Aorta (tissue), 5 donors: ENCODE measurements at regions of chr16 and their contacts with region 1.

Region 1: GRCh38 chr16:13919683-13920509 is at the start of gene ERCC4:
- DNase-seq: peak; percentile 100
- ATAC-seq: peak; percentile 99
- H3K4me3 ChIP-seq: peak within 1 kb of the TSS; percentile 52 to 67
- H3K27ac ChIP-seq: peak within 1 kb of the TSS in 1 of 2 donors; percentile 42
- H3K4me1 ChIP-seq: no peaks in the 10 kb centered on the region
- H3K27me3 ChIP-seq: no peaks in the 10 kb centered on the region
- total RNA-seq, gene ERCC4: 9.1 to 14.0 TPM

Region 2: GRCh38 chr16:13594823-13595222 is 325.1 kb before region 1 on chr16:
- intact Hi-C with region 1: no loop called
- DNase-seq: no peak
- ATAC-seq: no peak
- H3K4me3 ChIP-seq: no peak overlapping the region
- H3K27ac ChIP-seq: no peak overlapping the region
- H3K4me1 ChIP-seq: no peaks in the 10 kb centered on the region
- H3K27me3 ChIP-seq: no peaks in the 10 kb centered on the region

Region 3: GRCh38 chr16:13866073-13866472 is 53.8 kb before region 1 on chr16:
- intact Hi-C with region 1: loop called in 1 of 2 experiments (anchors 5 kb)
- DNase-seq: peak; percentile 65 to 84
- ATAC-seq: peak; percentile 78
- H3K4me3 ChIP-seq: no peak overlapping the region
- H3K27ac ChIP-seq: no peak overlapping the region
- H3K4me1 ChIP-seq: peaks cover 4 to 12% of the 10 kb centered on the region in 2 donors
- H3K27me3 ChIP-seq: no peaks in the 10 kb centered on the region

Region 4: GRCh38 chr16:13961099-13961811 is 41.4 kb after region 1 on chr16:
- intact Hi-C with region 1: no loop called
- DNase-seq: no peak
- ATAC-seq: no peak
- H3K4me3 ChIP-seq: no peak overlapping the region
- H3K27ac ChIP-seq: no peak overlapping the region
- H3K4me1 ChIP-seq: no peaks in the 10 kb centered on the region
- H3K27me3 ChIP-seq: no peaks in the 10 kb centered on the region

Region 5: GRCh38 chr16:14186007-14186794 is 266.3 kb after region 1 on chr16:
- intact Hi-C with region 1: loop called (anchors 2 to 5 kb)
- DNase-seq: peak; percentile 58 to 81
- ATAC-seq: peak; percentile 80
- H3K4me3 ChIP-seq: peak overlapping the region; percentile 26 to 66
- H3K27ac ChIP-seq: peak overlapping the region; percentile 11 to 62
- H3K4me1 ChIP-seq: peaks cover 2 to 4% of the 10 kb centered on the region in 2 donors
- H3K27me3 ChIP-seq: no peaks in the 10 kb centered on the region

Region 6: GRCh38 chr16:14240219-14240843 is 320.4 kb after region 1 on chr16:
- intact Hi-C with region 1: loop called (anchors 5 kb)
- DNase-seq: no peak
- ATAC-seq: peak; percentile 44
- H3K4me3 ChIP-seq: no peak overlapping the region
- H3K27ac ChIP-seq: no peak overlapping the region
- H3K4me1 ChIP-seq: peaks cover 0 to 3% of the 10 kb centered on the region in 2 donors
- H3K27me3 ChIP-seq: no peaks in the 10 kb centered on the region

Region 7: GRCh38 chr16:14249291-14250032 is 329.6 kb after region 1 on chr16:
- intact Hi-C with region 1: loop called (anchors 5 kb)
- DNase-seq: no peak
- ATAC-seq: peak; percentile 71
- H3K4me3 ChIP-seq: no peak overlapping the region
- H3K27ac ChIP-seq: no peak overlapping the region
- H3K4me1 ChIP-seq: no peaks in the 10 kb centered on the region
- H3K27me3 ChIP-seq: no peaks in the 10 kb centered on the region

Region 8: GRCh38 chr16:14285513-14286385 is 365.9 kb after region 1 on chr16:
- intact Hi-C with region 1: loop called in 1 of 2 experiments (anchors 5 kb)
- DNase-seq: peak; percentile 93 to 98
- ATAC-seq: peak; percentile 96
- H3K4me3 ChIP-seq: peak overlapping the region; percentile 32 to 93
- H3K27ac ChIP-seq: peak overlapping the region in 1 of 2 donors; percentile 47
- H3K4me1 ChIP-seq: no peaks in the 10 kb centered on the region
- H3K27me3 ChIP-seq: no peaks in the 10 kb centered on the region

Region 9: GRCh38 chr16:14529010-14529669 is 609.2 kb after region 1 on chr16:
- intact Hi-C with region 1: loop called in 1 of 2 experiments (anchors 5 kb)
- DNase-seq: peak; percentile 76 to 85
- ATAC-seq: peak; percentile 91
- H3K4me3 ChIP-seq: peak overlapping the region; percentile 29 to 66
- H3K27ac ChIP-seq: no peak overlapping the region
- H3K4me1 ChIP-seq: peaks cover 2 to 4% of the 10 kb centered on the region in 2 donors
- H3K27me3 ChIP-seq: no peaks in the 10 kb centered on the region